H1 (cell line): ENCODE measurements at regions of chr1 and their contacts with region 1.

Region 1: DNA sequence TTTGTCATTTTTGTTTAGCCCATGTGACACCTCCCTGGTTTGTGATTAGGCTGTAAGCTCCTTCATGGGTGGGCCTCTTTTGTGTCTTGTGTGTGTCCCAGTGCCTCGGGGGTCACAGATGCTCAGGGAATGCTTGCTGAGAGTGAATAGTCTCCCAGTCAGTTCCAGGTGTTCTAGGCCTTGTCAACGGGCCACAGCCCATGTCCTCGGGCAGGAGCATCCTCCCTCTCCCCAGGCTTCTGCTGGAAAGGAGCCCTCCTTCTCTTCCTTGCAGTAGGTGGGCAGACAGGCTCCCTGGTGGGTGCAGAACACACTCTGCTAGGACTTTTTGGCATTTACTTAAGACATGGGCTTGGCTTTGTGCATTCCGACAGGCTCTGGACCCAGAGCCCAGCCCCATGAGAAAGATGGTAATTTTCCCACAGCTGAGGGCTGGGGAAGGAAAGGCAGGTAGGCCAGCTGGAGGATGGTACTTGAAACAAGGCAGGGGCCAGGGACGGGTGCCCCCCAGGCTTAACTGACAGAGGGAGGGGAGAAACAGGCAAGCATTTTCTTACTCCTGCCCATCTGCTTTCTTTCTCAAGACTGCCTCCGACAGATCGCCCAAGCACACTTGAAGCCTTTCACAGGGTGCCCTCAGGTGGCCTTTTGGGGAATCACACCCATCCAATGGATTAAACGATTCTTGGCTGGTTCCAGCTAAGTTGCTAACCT is 7.1 kb upstream of the CPLANE2 start:
- DNase-seq: peak; percentile 51 to 90
- H3K4me3 ChIP-seq: no peak overlapping the region
- H3K27ac ChIP-seq: no peak overlapping the region
- H3K4me1 ChIP-seq: peaks cover 0 to 3% (median 0%) of the 10 kb centered on the region in 4 experiments; a peak in 1 of 7 replicates
- H3K27me3 ChIP-seq: no peaks in the 10 kb centered on the region
- CTCF ChIP-seq: peak; percentile 75 to 93 (median 89)
- EP300 ChIP-seq: no peak
- POLR2A ChIP-seq: no peak; a peak in 1 of 3 replicates
- RAD21 ChIP-seq: peak; percentile 95 to 96

Region 2: GRCh38 chr1:16187748-16188401 is 56.2 kb before region 1 on chr1:
- CTCF ChIA-PET with region 1: interaction called, 43 read pairs
- POLR2A ChIA-PET with region 1: no interaction called
- DNase-seq: peak in 1 of 2 experiments; percentile 95
- H3K4me3 ChIP-seq: no peak overlapping the region
- H3K27ac ChIP-seq: no peak overlapping the region
- H3K4me1 ChIP-seq: no peaks in the 10 kb centered on the region
- H3K27me3 ChIP-seq: no peaks in the 10 kb centered on the region; a peak in 1 of 7 replicates
- CTCF ChIP-seq: peak; percentile 92 to 98 (median 95)
- EP300 ChIP-seq: no peak
- POLR2A ChIP-seq: no peak
- RAD21 ChIP-seq: peak; percentile 100

Region 3: DNA sequence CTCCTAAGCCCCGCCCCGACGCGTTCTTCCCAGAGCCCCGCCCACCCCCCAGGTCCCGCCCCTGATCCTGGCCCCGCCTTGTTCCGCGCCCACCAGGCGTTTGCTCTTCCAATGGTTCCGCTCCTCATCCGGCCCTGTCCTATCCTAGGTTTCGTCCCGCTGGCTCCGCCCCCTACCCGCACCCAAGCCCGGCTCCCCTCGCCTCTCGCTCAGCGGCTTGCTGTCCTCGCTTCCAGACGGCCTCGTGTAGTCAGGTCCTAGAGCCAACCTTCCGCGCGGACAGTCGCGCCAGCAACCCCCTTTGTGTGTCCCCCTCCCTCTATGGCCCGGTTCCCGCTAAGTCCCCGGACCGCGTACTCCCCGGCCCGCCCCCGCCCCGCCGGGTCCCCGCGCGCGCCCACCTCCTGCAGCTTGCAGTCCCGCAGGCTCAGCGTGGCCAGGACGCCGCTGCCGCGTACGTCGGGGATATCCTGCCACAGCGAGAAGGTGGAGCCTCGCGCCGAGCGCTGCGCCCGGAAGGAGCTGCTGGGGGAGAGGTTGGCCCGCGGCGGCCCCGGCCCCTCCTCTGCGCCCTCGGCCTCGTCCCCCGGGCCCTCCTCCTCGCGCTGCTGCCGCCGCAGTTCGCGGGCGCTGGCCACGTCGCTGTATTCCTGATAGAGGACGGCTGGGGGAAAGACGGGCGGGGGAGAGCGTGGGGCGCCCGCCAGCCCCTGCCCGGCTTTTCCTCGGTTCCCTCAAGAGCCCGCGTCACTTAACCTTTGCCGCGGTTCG is 37.4 kb before region 1 on chr1:
- CTCF ChIA-PET with region 1: interaction called, 37 read pairs
- POLR2A ChIA-PET with region 1: interaction called, 4 read pairs
- DNase-seq: peak; percentile 96 to 97
- H3K4me3 ChIP-seq: peak overlapping the region; percentile 50 to 67 (median 58)
- H3K27ac ChIP-seq: peak overlapping the region; percentile 56; the same call in 1 of the 2 replicates
- H3K4me1 ChIP-seq: peaks cover 4 to 33% (median 20%) of the 10 kb centered on the region in 4 experiments
- H3K27me3 ChIP-seq: no peaks in the 10 kb centered on the region
- CTCF ChIP-seq: no peak
- EP300 ChIP-seq: no peak
- POLR2A ChIP-seq: peak; percentile 68 to 79; a peak in 2 of 3 replicates
- RAD21 ChIP-seq: no peak

Region 4: DNA sequence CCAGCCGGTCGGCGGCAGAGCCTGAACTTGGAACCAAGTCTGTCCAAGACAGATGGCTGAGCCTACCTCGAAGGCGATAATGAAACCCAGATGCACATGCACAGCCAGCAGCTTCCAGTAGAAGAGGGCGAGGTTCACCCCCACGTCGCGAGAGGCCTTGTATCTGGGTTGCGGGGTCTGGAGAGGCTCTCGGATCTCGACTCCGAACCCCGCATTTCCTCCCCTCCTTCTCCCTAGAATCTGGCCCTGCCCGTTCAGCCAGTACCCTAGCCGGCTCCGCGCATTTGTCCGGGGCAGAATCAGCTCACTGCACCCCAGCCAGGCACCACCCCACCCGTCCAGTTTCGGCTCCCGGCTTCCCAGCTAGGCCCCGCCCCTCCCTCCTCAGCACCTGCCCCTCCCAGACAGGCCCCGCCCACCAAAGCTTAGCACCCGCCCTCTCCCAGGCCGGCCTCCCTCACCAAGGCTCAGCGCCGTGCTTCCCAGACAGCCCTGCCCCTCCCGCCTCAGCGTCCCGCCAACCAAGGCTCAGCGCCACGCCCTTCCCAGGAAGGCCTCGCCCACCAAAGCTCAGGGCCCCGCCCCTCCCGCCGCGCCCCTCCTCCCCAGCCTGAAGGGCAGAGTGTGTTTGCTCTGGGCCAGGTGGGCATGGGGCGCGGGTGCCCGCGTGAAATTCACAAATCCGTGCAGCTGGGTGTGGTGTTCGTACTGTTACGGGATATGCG is 26.9 kb before region 1 on chr1:
- CTCF ChIA-PET with region 1: interaction called, 21 read pairs
- POLR2A ChIA-PET with region 1: interaction called, 3 read pairs
- DNase-seq: peak; percentile 93 to 98
- H3K4me3 ChIP-seq: peak overlapping the region; percentile 24 to 62 (median 54); a peak in 7 of 8 replicates
- H3K27ac ChIP-seq: no peak overlapping the region
- H3K4me1 ChIP-seq: peaks cover 6 to 23% (median 19%) of the 10 kb centered on the region in 4 experiments
- H3K27me3 ChIP-seq: peaks cover 0 to 14% (median 6%) of the 10 kb centered on the region in 4 experiments; a peak in 5 of 7 replicates
- CTCF ChIP-seq: no peak
- EP300 ChIP-seq: no peak
- POLR2A ChIP-seq: no peak
- RAD21 ChIP-seq: no peak

Region 5: GRCh38 chr1:16260814-16261213 is 16.7 kb after region 1 on chr1:
- CTCF ChIA-PET with region 1: interaction called, 14 read pairs
- POLR2A ChIA-PET with region 1: interaction called, 3 read pairs
- DNase-seq: no peak
- H3K4me3 ChIP-seq: no peak overlapping the region
- H3K27ac ChIP-seq: no peak overlapping the region
- H3K4me1 ChIP-seq: no peaks in the 10 kb centered on the region; a peak in 1 of 7 replicates
- H3K27me3 ChIP-seq: no peaks in the 10 kb centered on the region
- CTCF ChIP-seq: no peak
- EP300 ChIP-seq: no peak
- POLR2A ChIP-seq: no peak
- RAD21 ChIP-seq: no peak

Region 6: GRCh38 chr1:16266411-16267118 is 22.5 kb after region 1 on chr1:
- CTCF ChIA-PET with region 1: interaction called, 14 read pairs
- POLR2A ChIA-PET with region 1: interaction called, 5 read pairs
- DNase-seq: no peak
- H3K4me3 ChIP-seq: no peak overlapping the region
- H3K27ac ChIP-seq: no peak overlapping the region
- H3K4me1 ChIP-seq: no peaks in the 10 kb centered on the region
- H3K27me3 ChIP-seq: no peaks in the 10 kb centered on the region
- CTCF ChIP-seq: no peak
- EP300 ChIP-seq: no peak
- POLR2A ChIP-seq: no peak
- RAD21 ChIP-seq: no peak

Region 7: DNA sequence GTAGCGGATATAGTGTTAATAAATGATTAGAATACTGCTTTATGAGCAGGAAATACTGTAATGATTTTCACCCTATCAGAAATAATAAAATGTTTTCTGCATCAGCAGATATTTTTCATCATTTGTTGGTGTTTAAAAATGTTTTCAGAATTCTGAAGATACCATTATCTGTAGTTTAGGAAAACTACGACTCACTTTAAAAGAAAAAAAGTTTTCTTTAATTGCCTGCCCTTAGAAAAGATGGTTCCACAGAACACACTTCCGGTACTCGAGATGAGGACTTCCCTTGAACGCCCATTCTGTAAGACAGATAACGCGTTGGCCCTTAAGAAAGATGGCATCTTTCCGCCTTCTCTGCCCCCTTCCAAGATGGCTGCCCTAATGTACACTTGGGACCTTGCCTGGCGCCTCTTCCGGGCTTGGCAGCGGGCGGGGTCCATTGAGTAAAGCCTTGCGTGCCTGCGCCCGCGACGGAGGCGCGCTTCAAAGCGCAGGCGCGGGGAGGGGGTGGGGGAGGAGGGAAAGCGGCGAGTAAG is 122.7 kb after region 1 on chr1 and contains the start of gene SZRD1:
- CTCF ChIA-PET with region 1: interaction called, 27 read pairs
- POLR2A ChIA-PET with region 1: interaction called, 3 read pairs
- DNase-seq: peak; percentile 82 to 97
- H3K4me3 ChIP-seq: peak within 1 kb of the TSS; percentile 72 to 91 (median 80)
- H3K27ac ChIP-seq: peak within 1 kb of the TSS; percentile 88
- H3K4me1 ChIP-seq: peaks cover 0 to 3% (median 1%) of the 10 kb centered on the region in 4 experiments; a peak in 2 of 7 replicates
- H3K27me3 ChIP-seq: no peaks in the 10 kb centered on the region
- CTCF ChIP-seq: no peak
- EP300 ChIP-seq: 0 out of 3 replicates have a peak, but pooled peaks of 1 of the 2 experiments have one; percentile 53
- POLR2A ChIP-seq: no peak
- RAD21 ChIP-seq: no peak
- total RNA-seq, gene SZRD1: 108 and 116 TPM in 2 replicates